ENCODE measurements at regions of chr3 and their contacts with region 1.

Region 1: GRCh38 chr3:10198761-10199649 is 34.3 kb downstream of the IRAK2 start:
- DNase-seq: peak; percentile 93
- H3K4me3 Mint-ChIP-seq: peak overlapping the region; percentile 61
- H3K27ac Mint-ChIP-seq: peak overlapping the region; percentile 90
- H3K4me1 Mint-ChIP-seq: peaks cover 71% of the 10 kb centered on the region
- H3K27me3 Mint-ChIP-seq: no peaks in the 10 kb centered on the region

Region 2: DNA sequence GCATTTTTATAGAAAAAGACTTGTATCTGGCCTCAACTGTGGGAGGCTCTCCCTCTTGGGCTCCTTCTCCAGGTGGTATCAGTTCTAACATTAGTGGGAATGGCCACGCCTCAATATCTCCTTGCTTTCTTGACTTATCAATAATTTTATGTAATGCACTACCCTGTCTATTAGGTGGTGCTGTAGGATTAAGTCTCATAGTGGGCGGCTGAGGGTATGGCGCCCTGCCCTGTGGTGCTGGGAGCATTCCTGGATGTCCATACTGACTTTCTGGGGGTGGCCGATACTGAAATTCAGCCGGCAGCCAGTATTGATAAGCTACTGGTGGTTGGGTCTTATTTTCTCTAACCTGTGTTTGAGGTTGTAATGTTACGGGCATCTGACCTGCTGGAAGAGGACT is 346.5 kb before region 1 on chr3:
- intact Hi-C with region 1: no loop called
- DNase-seq: no peak
- H3K4me3 Mint-ChIP-seq: no peak overlapping the region
- H3K27ac Mint-ChIP-seq: no peak overlapping the region
- H3K4me1 Mint-ChIP-seq: peaks cover 9% of the 10 kb centered on the region
- H3K27me3 Mint-ChIP-seq: peaks cover 30% of the 10 kb centered on the region

Region 3: GRCh38 chr3:10088232-10088631 is 110.8 kb before region 1 on chr3:
- intact Hi-C with region 1: no loop called
- DNase-seq: no peak
- H3K4me3 Mint-ChIP-seq: no peak overlapping the region
- H3K27ac Mint-ChIP-seq: no peak overlapping the region
- H3K4me1 Mint-ChIP-seq: no peaks in the 10 kb centered on the region
- H3K27me3 Mint-ChIP-seq: no peaks in the 10 kb centered on the region

Region 4: DNA sequence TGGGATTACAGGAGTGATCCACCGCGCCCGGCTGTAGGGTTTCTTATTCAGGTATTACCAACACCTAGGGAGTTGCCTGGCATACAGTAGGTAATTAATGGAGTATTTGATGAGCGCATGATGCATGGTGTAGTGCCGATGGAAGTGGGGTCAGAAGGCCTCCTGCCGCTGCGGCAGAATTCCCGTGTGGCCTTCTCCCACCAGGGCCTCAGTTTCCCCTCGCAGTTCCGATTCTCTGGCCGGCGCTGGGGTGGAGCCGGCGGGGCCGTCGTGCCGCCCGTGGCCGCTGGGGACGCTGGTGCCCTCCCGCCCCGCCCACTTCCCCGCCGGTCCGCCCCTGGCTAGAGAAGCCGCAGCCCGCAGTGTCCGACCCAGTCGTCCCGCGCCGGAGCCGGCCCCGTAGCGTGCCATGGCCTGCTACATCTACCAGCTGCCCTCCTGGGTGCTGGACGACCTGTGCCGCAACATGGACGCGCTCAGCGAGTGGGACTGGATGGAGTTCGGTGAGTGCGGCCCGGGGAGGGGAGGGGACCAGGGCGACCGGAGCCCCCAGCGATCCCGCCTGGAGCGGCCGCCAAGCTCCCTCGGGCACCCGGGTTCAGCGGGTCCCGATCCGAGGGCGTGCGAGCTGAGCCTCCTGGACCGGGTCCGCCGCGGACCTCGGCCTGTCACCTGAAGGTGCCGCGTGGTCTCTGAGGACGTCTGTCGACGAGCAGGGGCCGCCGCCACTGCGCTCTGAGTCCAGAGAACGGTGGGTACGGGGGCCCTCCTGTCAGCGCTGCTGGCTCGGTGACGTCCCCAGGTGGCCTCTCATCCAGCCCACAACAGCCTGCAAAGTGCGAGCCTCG is 34.2 kb before region 1 on chr3 and contains the start of gene IRAK2:
- intact Hi-C with region 1: loop called (anchors 2 kb)
- DNase-seq: peak; percentile 88
- H3K4me3 Mint-ChIP-seq: peak within 1 kb of the TSS; percentile 81
- H3K27ac Mint-ChIP-seq: peak within 1 kb of the TSS; percentile 29
- H3K4me1 Mint-ChIP-seq: peaks cover 22% of the 10 kb centered on the region
- H3K27me3 Mint-ChIP-seq: no peaks in the 10 kb centered on the region
- total RNA-seq, gene IRAK2: 4.5 and 5.1 TPM in 2 replicates

Measured in activated CD4-positive, alpha-beta T cell treated with anti-CD3 and anti-CD28 coated beads, Interleukin-2, amount 10 ng/mL, durations not matched to agents 24 days and 14 days (primary cell).